ENCODE measurements at regions of chr5 and their contacts with region 1.

Region 1: GRCh38 chr5:108521841-108522506 is 140.1 kb upstream of the FBXL17 start:
- DNase-seq: peak; percentile 51 to 73 (median 52)
- ATAC-seq: peak; percentile 98
- H3K4me3 ChIP-seq: no peak overlapping the region
- H3K27ac ChIP-seq: no peak overlapping the region
- H3K4me1 ChIP-seq: peaks cover 0 to 7% of the 10 kb centered on the region in 2 experiments; a peak in 1 of 5 replicates
- H3K27me3 ChIP-seq: no peaks in the 10 kb centered on the region
- CTCF ChIP-seq: peak; percentile 57 to 81 (median 72); a peak in 5 of 6 replicates
- EP300 ChIP-seq: no peak
- POLR2A ChIP-seq: no peak
- RAD21 ChIP-seq: peak; percentile 91 to 95

Region 2: GRCh38 chr5:108579236-108579635 is 57.3 kb after region 1 on chr5:
- CTCF ChIA-PET with region 1: no interaction called
- POLR2A ChIA-PET with region 1: no interaction called
- in situ Hi-C with region 1: no loop called
- intact Hi-C with region 1: loop called (anchors 1 kb)
- DNase-seq: no peak
- ATAC-seq: peak; percentile 43; the same call in 1 of the 3 replicates
- H3K4me3 ChIP-seq: no peak overlapping the region
- H3K27ac ChIP-seq: no peak overlapping the region
- H3K4me1 ChIP-seq: no peaks in the 10 kb centered on the region
- H3K27me3 ChIP-seq: no peaks in the 10 kb centered on the region; a peak in 3 of 5 replicates
- CTCF ChIP-seq: peak in 1 of 3 experiments; percentile 39; a peak in 1 of 6 replicates
- EP300 ChIP-seq: no peak
- POLR2A ChIP-seq: no peak
- RAD21 ChIP-seq: peak; percentile 42 to 52

Region 3: GRCh38 chr5:108642167-108642906 is 120.4 kb after region 1 on chr5:
- CTCF ChIA-PET with region 1: no interaction called
- POLR2A ChIA-PET with region 1: no interaction called
- in situ Hi-C with region 1: no loop called
- intact Hi-C with region 1: loop called (anchors 1 kb)
- DNase-seq: peak; percentile 57 to 82 (median 68)
- ATAC-seq: peak; percentile 100
- H3K4me3 ChIP-seq: no peak overlapping the region
- H3K27ac ChIP-seq: peak overlapping the region; percentile 48; the same call in 1 of the 3 replicates
- H3K4me1 ChIP-seq: peaks cover 0 to 6% of the 10 kb centered on the region in 2 experiments; a peak in 1 of 5 replicates
- H3K27me3 ChIP-seq: no peaks in the 10 kb centered on the region; a peak in 1 of 5 replicates
- CTCF ChIP-seq: peak; percentile 82 to 92 (median 87)
- EP300 ChIP-seq: no peak
- POLR2A ChIP-seq: no peak
- RAD21 ChIP-seq: peak; percentile 89 to 91

Region 4: GRCh38 chr5:108748401-108749127 is 226.6 kb after region 1 on chr5:
- CTCF ChIA-PET with region 1: no interaction called
- POLR2A ChIA-PET with region 1: no interaction called
- in situ Hi-C with region 1: no loop called
- intact Hi-C with region 1: loop called (anchors 5 kb)
- DNase-seq: peak; percentile 96 to 99 (median 98)
- ATAC-seq: peak; percentile 97
- H3K4me3 ChIP-seq: peak overlapping the region; percentile 67
- H3K27ac ChIP-seq: peak overlapping the region; percentile 89
- H3K4me1 ChIP-seq: peaks cover 0 to 12% of the 10 kb centered on the region in 2 experiments; a peak in 1 of 5 replicates
- H3K27me3 ChIP-seq: no peaks in the 10 kb centered on the region
- CTCF ChIP-seq: peak in 1 of 3 experiments; percentile 38; a peak in 2 of 6 replicates
- EP300 ChIP-seq: no peak
- POLR2A ChIP-seq: peak; percentile 99
- RAD21 ChIP-seq: peak in 1 of 2 experiments; percentile 15; a peak in 2 of 4 replicates

Measured in K562 (cell line).